ENCODE measurements at regions of chr17 and their contacts with region 1.

Region 1: GRCh38 chr17:50026901-50027630 is 28.8 kb upstream of the ITGA3 start:
- DNase-seq: no peak
- H3K4me3 ChIP-seq: peak overlapping the region; percentile 22
- H3K27me3 ChIP-seq: no peaks in the 10 kb centered on the region
- CTCF ChIP-seq: peak; percentile 94

Region 2: GRCh38 chr17:50055426-50056230 is 28.6 kb after region 1 on chr17 and contains the start of gene ITGA3:
- CTCF ChIA-PET with region 1: interaction called, 40 read pairs
- POLR2A ChIA-PET with region 1: interaction called, 4 read pairs
- DNase-seq: no peak
- H3K4me3 ChIP-seq: peak within 1 kb of the TSS; percentile 84
- H3K27me3 ChIP-seq: no peaks in the 10 kb centered on the region
- CTCF ChIP-seq: no peak
- polyA plus RNA-seq, gene ITGA3: 71.9 and 184 TPM in 2 replicates

Region 3: DNA sequence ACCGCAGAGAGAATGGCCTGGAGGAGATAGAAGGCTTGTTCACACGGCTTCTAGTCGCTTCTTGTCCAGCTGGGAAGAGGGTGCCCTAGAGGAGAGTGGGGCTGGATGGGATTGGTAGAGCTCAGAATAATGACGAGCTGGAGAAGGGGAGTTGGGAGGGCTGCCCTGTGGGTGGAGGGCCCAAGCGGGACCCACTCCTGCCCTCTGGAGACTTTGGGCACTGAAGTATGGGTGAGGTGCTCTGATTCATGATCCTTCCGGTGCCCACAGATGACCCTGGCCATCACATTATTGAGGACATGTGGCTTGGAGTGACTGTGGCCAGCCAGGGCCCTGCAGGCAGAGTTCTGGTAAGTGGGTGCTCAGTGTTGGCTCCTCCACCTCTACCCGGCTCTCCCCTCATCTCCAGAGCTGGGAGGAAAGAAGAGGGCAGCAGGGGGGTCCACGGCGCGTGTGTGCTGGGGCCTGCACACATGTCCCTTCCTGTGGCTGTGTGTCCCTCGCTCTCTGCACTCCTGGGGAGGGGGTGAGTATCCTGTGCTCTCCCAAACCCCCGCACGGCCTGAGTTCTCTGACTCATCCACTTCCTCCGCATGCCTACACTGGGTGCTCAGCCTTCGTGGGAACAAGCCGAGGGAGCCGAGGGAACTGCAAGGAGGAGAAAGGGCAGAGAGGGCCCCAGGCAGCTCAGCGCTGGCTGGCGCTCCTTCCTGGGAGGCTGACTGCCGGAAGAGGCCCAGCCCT is 37.4 kb after region 1 on chr17:
- CTCF ChIA-PET with region 1: interaction called, 40 read pairs
- POLR2A ChIA-PET with region 1: no interaction called
- DNase-seq: peak; percentile 86
- H3K4me3 ChIP-seq: no peak overlapping the region
- H3K27me3 ChIP-seq: no peaks in the 10 kb centered on the region
- CTCF ChIP-seq: no peak

Region 4: GRCh38 chr17:50079334-50080095 is 52.4 kb after region 1 on chr17:
- CTCF ChIA-PET with region 1: interaction called, 35 read pairs
- POLR2A ChIA-PET with region 1: no interaction called
- DNase-seq: no peak
- H3K4me3 ChIP-seq: no peak overlapping the region
- H3K27me3 ChIP-seq: no peaks in the 10 kb centered on the region
- CTCF ChIP-seq: peak; percentile 78

Region 5: GRCh38 chr17:50094753-50095619 is 67.9 kb after region 1 on chr17 and contains the start of gene PDK2:
- CTCF ChIA-PET with region 1: interaction called, 78 read pairs
- POLR2A ChIA-PET with region 1: no interaction called
- DNase-seq: peak; percentile 63
- H3K4me3 ChIP-seq: peak within 1 kb of the TSS; percentile 91
- H3K27me3 ChIP-seq: no peaks in the 10 kb centered on the region
- CTCF ChIP-seq: no peak
- polyA plus RNA-seq, gene PDK2: 79.3 and 155 TPM in 2 replicates

Region 6: GRCh38 chr17:50151041-50151936 is 124.2 kb after region 1 on chr17:
- CTCF ChIA-PET with region 1: no interaction called
- POLR2A ChIA-PET with region 1: interaction called, 18 read pairs
- DNase-seq: no peak
- H3K4me3 ChIP-seq: peak overlapping the region; percentile 67
- H3K27me3 ChIP-seq: no peaks in the 10 kb centered on the region
- CTCF ChIP-seq: peak; percentile 75

Region 7: DNA sequence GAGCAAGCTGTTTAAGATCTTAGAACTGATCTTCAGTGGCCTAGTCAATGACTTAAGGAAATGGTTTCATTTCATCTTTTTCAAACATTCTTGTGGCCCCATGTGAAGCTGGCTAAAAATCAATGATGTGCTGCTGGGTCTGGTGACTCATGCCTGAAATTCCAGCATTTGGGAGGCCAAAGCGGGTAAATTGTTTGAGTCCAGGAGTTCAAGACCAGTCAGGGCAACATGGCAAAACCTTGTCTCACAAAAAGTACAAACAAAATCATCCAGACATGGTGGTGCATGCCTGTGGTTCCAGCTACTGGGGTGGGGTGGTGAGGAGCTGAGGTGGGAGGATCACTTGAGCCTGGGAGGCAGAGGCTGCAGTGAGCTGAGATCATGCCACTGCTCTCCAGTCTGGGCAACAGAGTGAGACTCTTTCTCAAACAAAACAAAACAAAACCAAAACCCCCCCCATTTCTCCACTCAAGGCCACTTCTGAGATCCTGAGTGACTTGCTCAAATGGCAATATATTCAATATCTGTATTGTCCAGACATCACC is 191.8 kb after region 1 on chr17:
- CTCF ChIA-PET with region 1: no interaction called
- POLR2A ChIA-PET with region 1: no interaction called
- DNase-seq: peak; percentile 93
- H3K4me3 ChIP-seq: no peak overlapping the region
- H3K27me3 ChIP-seq: no peaks in the 10 kb centered on the region
- CTCF ChIP-seq: no peak